Lower leg skin (tissue), 4 donors: ENCODE measurements at regions of chr1 and their contacts with region 1.

Region 1: DNA sequence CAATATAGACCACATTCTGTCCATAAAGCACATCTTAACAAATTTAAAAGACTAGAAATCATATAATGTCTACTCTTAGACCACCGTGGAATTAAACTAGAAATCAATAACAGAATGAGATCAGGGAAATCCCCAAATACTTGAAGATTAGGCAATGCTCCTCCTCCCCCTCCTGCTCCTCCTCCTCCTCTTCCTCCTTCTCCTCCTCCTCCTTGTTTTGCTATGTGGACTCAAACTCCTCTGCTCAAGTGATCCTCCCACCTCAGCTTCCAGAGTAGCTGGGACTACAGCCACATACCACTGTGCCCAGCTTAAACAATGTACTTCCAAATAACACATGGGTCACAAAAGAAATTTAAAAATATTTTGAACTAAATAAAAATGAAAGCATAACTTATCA is 134.2 kb downstream of the GRIK3 start:
- DNase-seq: peak in 1 of 2 donors; percentile 5
- H3K4me3 ChIP-seq: no peak overlapping the region
- CTCF ChIP-seq: no peak
- POLR2A ChIP-seq: no peak

Region 2: GRCh38 chr1:36981771-36982622 is 81.9 kb after region 1 on chr1:
- intact Hi-C with region 1: loop called (anchors 5 kb)
- DNase-seq: no peak
- H3K4me3 ChIP-seq: no peak overlapping the region
- CTCF ChIP-seq: no peak
- POLR2A ChIP-seq: no peak